Heart left ventricle (tissue), 16 donors: ENCODE measurements at regions of chr19 and their contacts with region 1.

Region 1: DNA sequence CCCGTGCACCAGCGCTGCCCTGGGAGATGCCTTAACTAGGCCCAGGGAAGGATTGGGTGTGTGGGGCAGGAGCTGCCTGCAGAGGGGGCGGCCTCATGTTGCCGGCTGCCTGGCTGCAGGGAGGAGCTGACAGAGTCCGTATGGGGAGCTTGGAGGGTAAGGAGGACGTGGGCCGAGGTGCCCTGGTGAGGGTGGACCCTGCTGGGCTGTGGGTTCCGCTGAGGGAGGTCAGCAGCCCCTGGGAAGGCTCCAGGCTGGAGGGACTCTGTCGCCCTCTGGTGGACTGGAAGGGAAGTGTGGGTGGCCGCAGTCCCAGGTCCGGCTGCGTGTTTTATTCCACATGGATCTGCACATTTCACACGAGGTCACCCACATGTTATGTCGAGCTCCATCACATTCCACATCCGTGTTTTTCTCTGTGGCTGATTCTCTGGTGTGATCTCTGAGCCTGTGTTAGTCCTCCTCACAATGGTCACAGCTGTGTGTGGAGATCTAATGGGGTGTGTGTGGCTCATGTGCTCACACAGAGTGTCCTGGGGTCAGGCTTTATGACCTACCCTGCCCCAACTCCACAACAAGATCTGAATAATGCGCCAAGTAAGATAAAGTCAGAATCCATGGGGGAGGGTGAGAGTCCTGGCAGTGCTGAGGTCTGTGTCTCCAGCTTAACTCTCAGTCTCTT is 1.8 kb upstream of the CEACAM8 start:
- DNase-seq: peak in 3 of 5 donors; percentile 16 to 72 (median 30)
- ATAC-seq: peak in 2 of 4 donors; percentile 49 to 71
- H3K4me3 ChIP-seq: no peak overlapping the region
- H3K27ac ChIP-seq: no peak overlapping the region
- H3K4me1 ChIP-seq: no peaks in the 10 kb centered on the region
- H3K27me3 ChIP-seq: peaks cover 0 to 12% (median 0%) of the 10 kb centered on the region in 9 donors
- CTCF ChIP-seq: peak; percentile 76 to 95 (median 89)
- POLR2A ChIP-seq: no peak

Region 2: GRCh38 chr19:42563352-42564210 is 33.0 kb before region 1 on chr19:
- intact Hi-C with region 1: loop called in 2 of 10 experiments (anchors 2 kb)
- DNase-seq: peak in 1 of 5 donors; percentile 38
- ATAC-seq: peak in 3 of 4 donors; percentile 72 to 85 (median 78)
- H3K4me3 ChIP-seq: no peak overlapping the region
- H3K27ac ChIP-seq: peak overlapping the region in 1 of 12 donors; percentile 15
- H3K4me1 ChIP-seq: peaks cover 0 to 18% (median 9%) of the 10 kb centered on the region in 12 donors
- H3K27me3 ChIP-seq: peaks cover 0 to 10% (median 0%) of the 10 kb centered on the region in 9 donors
- CTCF ChIP-seq: peak; percentile 40 to 67 (median 54)
- POLR2A ChIP-seq: no peak